Aorta (tissue), 5 donors: ENCODE measurements at regions of chr19 and their contacts with region 1.

Region 1: DNA sequence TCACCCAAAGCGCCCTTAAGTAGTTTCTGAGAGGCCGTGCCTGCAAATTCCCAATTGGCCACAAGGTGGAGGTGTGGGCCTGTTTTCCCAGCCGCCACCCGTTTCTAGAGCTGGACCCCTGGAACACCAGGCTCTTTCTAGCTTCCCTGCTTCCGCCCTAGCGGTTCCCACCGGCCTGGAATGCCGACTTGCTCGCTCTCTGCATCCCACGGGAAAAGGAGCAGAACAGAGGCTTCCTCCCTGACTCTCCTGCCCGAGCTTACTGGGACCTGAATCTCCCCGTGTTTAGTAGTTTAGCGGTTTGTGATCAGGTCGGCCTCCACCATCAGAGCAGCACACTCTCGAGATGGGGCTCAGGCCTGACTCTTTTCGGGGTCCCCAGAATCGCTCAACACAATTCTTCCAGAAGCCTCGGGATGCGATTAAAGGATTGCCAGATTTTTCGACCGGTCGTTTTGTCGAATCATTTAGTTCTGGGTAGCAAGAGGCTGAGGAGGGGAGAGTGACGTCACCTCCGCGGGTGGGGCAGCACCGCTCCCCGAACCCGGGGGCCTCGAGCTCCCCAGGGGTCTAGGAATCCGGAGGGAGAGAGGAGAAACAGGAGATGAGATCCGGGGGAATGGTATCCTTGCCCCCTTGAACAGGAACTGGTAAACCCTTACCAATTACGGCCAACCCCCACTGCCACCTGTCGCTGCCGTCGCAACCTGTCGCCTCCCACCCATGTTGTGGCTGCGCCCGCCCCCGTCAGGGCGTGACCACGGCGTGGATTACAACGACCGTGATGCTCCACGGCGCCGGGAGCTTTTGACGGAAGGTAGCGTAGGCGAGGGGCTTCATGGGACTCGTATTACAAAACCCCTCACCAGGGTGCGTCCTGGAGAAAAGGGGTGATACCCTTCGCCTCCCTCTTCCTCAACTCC is 8.0 kb downstream of the NAPSA start:
- DNase-seq: peak; percentile 86 to 91
- ATAC-seq: peak; percentile 92
- H3K4me3 ChIP-seq: peak overlapping the region; percentile 1 to 27
- H3K27ac ChIP-seq: peak overlapping the region in 1 of 2 donors; percentile 42
- H3K4me1 ChIP-seq: no peaks in the 10 kb centered on the region
- H3K27me3 ChIP-seq: no peaks in the 10 kb centered on the region

Region 2: GRCh38 chr19:50414864-50415660 is 57.6 kb after region 1 on chr19:
- intact Hi-C with region 1: loop called in 1 of 2 experiments (anchors 2 kb)
- DNase-seq: peak; percentile 85 to 94
- ATAC-seq: peak; percentile 70
- H3K4me3 ChIP-seq: no peak overlapping the region
- H3K27ac ChIP-seq: no peak overlapping the region
- H3K4me1 ChIP-seq: no peaks in the 10 kb centered on the region
- H3K27me3 ChIP-seq: no peaks in the 10 kb centered on the region

Region 3: DNA sequence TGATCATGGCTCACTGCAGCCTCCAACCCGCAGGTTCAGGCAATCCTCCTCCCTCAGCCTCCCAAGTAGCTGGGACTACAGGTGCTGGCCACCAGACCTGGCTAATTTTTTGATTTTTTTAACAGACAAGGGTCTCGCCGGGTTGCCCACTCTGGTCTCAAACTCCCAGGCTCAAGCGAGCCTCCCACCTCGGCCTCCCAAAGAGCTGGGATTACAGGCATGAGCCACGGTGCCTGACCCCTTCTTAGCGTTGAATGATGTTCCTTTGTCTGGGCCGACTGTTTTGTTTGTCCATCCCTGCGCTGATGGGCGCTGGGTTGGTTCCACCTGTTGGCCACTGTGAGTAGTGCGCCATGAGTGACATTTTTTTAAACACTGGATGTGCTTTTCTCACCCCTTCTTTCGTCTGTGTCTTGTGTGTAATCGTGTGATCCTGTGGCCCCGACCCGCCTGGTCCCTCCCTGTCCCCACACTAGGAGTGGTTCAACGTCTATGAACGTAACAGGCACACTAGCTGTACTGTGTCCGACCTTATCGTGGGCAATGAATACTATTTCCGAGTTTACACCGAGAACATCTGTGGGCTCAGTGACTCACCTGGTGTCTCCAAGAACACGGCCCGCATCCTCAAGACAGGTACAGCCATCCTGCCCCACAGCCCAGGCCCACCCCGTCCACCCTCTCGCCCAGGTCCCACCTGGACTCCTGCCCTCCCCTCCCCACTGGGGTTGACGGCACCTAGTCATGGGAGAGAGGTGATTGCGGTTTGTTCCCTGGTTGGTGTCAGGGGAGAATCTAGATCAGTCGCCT is 103.8 kb after region 1 on chr19:
- intact Hi-C with region 1: loop called in 1 of 2 experiments (anchors 5 kb)
- DNase-seq: no peak
- ATAC-seq: no peak
- H3K4me3 ChIP-seq: no peak overlapping the region
- H3K27ac ChIP-seq: no peak overlapping the region
- H3K4me1 ChIP-seq: no peaks in the 10 kb centered on the region
- H3K27me3 ChIP-seq: no peaks in the 10 kb centered on the region

Region 4: GRCh38 chr19:50777754-50778303 is 420.4 kb after region 1 on chr19:
- intact Hi-C with region 1: loop called (anchors 1 to 5 kb)
- DNase-seq: no peak
- ATAC-seq: no peak
- H3K4me3 ChIP-seq: no peak overlapping the region
- H3K27ac ChIP-seq: no peak overlapping the region
- H3K4me1 ChIP-seq: no peaks in the 10 kb centered on the region
- H3K27me3 ChIP-seq: no peaks in the 10 kb centered on the region

Region 5: GRCh38 chr19:50922317-50922853 is 564.9 kb after region 1 on chr19:
- intact Hi-C with region 1: loop called in 1 of 2 experiments (anchors 2 kb)
- DNase-seq: peak; percentile 63 to 82
- ATAC-seq: peak; percentile 72
- H3K4me3 ChIP-seq: no peak overlapping the region
- H3K27ac ChIP-seq: no peak overlapping the region
- H3K4me1 ChIP-seq: no peaks in the 10 kb centered on the region
- H3K27me3 ChIP-seq: no peaks in the 10 kb centered on the region